Activated T-helper 2 cell treated with anti-CD3 and anti-CD28 coated beads, Interferon-gamma antibody, Interleukin-2, Interleukin-4, amounts not matched to agents 10 μg/mL and 5 μg/mL and 100 μg/mL, durations not matched to agents 14 hours and 24 hours and 36 hours (primary cell): ENCODE measurements at regions of chr2 and their contacts with region 1.

Region 1: GRCh38 chr2:127086990-127087790 is 19.8 kb downstream of the BIN1 start:
- DNase-seq: no peak
- H3K4me3 Mint-ChIP-seq: no peak overlapping the region
- H3K27ac Mint-ChIP-seq: no peak overlapping the region
- H3K4me1 Mint-ChIP-seq: peaks cover 26% of the 10 kb centered on the region
- H3K27me3 Mint-ChIP-seq: peaks cover 3% of the 10 kb centered on the region

Region 2: DNA sequence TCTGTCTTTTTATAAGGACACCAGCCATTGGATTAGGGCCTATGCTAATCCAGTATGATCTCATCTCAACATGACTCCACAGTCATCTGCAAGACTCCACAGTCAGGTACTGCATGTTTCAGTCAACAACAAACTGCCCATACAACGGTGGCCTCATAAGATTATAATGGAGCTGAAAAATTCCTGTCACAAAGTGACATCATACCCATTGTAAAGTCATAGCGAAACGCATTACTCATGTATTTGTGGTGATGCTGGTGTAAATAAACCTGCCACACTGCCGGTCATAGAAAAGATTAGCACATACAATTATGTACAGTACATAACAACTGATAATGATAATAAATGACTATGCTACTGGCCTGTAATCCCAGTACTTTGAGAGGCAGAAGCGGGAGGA is 86.3 kb before region 1 on chr2:
- intact Hi-C with region 1: no loop called
- DNase-seq: no peak
- H3K4me3 Mint-ChIP-seq: no peak overlapping the region
- H3K27ac Mint-ChIP-seq: no peak overlapping the region
- H3K4me1 Mint-ChIP-seq: no peaks in the 10 kb centered on the region
- H3K27me3 Mint-ChIP-seq: peaks cover 15% of the 10 kb centered on the region

Region 3: DNA sequence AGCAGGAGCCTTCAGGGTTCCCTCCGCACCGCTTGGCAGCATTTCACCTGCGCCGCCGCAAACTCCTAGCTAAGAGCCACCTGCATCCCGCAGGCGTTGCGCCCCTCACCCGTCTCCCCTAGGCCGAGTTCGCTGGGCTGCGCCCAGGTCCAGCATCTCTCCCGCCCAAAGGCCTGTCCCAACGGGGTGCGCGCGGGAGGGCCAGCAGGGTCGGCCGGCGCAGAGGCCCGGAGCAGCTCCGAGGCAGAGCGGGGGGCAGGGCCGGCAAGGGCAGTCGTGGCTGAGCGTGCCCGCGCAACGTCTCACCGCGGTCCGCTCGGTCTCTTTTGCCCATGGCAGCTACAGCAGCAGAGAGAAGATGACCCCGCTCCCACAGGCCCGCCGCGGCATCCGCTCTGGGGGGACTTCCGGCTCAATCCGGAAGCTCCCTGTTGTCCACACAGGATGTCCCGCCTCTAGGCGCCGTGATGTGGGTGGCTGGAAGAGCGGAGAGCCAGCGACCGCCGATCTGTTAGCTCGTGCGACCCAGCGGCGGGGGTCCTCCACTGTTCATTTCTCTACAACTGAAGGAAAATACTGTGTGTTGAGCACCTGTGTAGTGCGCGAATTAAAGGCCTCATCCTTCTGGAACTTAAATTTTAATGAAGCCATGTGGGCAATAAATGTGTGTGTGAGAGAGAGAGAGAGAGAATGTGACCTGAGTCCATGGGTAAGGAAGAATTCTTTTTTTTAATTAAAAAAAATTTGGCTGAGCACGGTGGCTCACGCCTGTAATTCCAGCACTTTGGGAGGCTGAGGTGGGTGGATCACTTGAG is 206.8 kb after region 1 on chr2 and contains the start of gene ERCC3:
- intact Hi-C with region 1: loop called (anchors 10 kb)
- DNase-seq: peak; percentile 74
- H3K4me3 Mint-ChIP-seq: peak within 1 kb of the TSS; percentile 100
- H3K27ac Mint-ChIP-seq: peak within 1 kb of the TSS; percentile 99
- H3K4me1 Mint-ChIP-seq: peaks cover 18% of the 10 kb centered on the region
- H3K27me3 Mint-ChIP-seq: no peaks in the 10 kb centered on the region
- total RNA-seq, gene ERCC3: 58.0 and 60.6 TPM in 2 replicates